ENCODE measurements at regions of chr20 and their contacts with region 1.

Region 1: GRCh38 chr20:45300961-45301360 is 5.7 kb upstream of the RBPJL start:
- DNase-seq: no peak
- H3K4me3 ChIP-seq: no peak overlapping the region
- CTCF ChIP-seq: peak; percentile 58

Region 2: DNA sequence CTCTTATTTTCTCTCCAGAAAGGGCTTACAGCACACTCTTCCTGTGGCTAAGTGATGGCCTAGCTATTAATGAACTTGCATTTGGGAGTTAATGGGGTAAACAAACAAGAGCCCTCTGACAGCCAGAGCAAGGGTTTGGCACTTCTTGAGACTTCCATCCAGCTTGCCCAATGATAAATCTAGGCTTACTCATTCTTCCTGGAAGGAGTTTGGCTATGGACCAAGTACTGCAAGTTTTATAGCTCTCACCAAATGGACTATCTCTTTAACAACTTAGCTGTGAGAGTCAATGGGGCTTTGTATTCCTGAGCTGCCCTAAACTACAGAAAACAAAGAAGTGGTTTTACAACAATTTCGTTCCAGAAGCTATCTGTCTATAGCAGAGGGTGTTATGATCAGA is 143.0 kb before region 1 on chr20:
- CTCF ChIA-PET with region 1: no interaction called
- POLR2A ChIA-PET with region 1: no interaction called
- DNase-seq: peak; percentile 5
- H3K4me3 ChIP-seq: no peak overlapping the region
- CTCF ChIP-seq: no peak

Region 3: GRCh38 chr20:45311589-45312211 is 10.7 kb after region 1 on chr20:
- CTCF ChIA-PET with region 1: interaction called, 30 read pairs
- POLR2A ChIA-PET with region 1: no interaction called
- DNase-seq: no peak
- H3K4me3 ChIP-seq: no peak overlapping the region
- CTCF ChIP-seq: peak; percentile 94